ENCODE measurements at regions of chr5 and their contacts with region 1.

Region 1: DNA sequence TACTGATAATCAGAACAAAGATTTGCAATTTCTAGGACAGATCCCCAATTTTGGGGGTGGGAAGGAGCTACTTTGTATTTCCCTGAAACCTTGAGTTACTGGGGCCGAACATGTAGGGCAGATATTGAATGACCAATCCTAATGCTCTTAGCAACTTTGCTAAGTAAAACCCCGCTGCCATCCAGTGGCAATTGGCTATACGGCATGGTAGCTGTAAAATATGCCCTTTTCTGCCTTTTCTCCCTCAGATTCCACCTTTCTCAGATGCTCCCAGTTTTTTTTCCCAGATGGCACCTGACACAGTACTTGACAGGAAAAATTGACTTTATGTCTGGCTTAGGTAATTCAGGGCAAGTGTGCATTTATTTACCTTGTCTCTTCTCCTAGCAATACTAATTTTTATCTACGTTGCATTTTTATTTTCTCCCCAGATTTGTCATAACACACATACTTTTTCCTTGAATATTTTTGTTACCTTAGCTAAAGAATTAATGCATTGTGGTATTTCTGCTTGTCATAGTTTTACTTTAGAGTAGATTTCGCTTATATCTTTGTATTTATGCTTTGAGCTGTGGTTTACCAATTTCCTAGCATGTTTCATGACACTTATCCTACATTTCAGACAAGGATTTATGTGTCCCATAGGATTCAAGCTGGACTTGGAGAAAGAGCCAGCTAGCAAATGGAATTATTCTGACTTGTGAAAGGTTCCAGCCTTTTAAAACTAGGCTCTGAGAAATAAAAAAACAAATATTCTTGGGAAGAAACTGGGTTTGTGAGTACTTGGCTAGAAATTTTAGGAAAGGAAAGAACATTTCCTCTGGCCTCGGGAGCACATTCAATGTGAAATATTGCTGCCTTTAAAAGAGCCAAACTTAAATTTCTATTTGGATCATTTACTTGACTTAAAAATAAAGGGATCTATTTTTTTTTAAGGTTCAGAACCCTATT is 37.4 kb downstream of the PIK3R1 start:
- DNase-seq: no peak
- ATAC-seq: peak; percentile 75
- H3K4me3 Mint-ChIP-seq: no peak overlapping the region
- H3K27ac Mint-ChIP-seq: no peak overlapping the region
- H3K4me1 Mint-ChIP-seq: peaks cover 83% of the 10 kb centered on the region
- H3K27me3 Mint-ChIP-seq: no peaks in the 10 kb centered on the region
- CTCF ChIP-seq: no peak

Region 2: GRCh38 chr5:67887641-67888161 is 365.2 kb before region 1 on chr5:
- CTCF ChIA-PET with region 1: no interaction called
- POLR2A ChIA-PET with region 1: no interaction called
- intact Hi-C with region 1: no loop called
- DNase-seq: no peak
- ATAC-seq: no peak
- H3K4me3 Mint-ChIP-seq: no peak overlapping the region
- H3K27ac Mint-ChIP-seq: no peak overlapping the region
- H3K4me1 Mint-ChIP-seq: no peaks in the 10 kb centered on the region
- H3K27me3 Mint-ChIP-seq: no peaks in the 10 kb centered on the region
- CTCF ChIP-seq: no peak

Region 3: GRCh38 chr5:68272289-68272688 is 19.3 kb after region 1 on chr5:
- CTCF ChIA-PET with region 1: interaction called, 19 read pairs
- POLR2A ChIA-PET with region 1: no interaction called
- intact Hi-C with region 1: no loop called
- DNase-seq: no peak
- ATAC-seq: no peak
- H3K4me3 Mint-ChIP-seq: no peak overlapping the region
- H3K27ac Mint-ChIP-seq: no peak overlapping the region
- H3K4me1 Mint-ChIP-seq: peaks cover 40% of the 10 kb centered on the region
- H3K27me3 Mint-ChIP-seq: no peaks in the 10 kb centered on the region
- CTCF ChIP-seq: no peak

Region 4: DNA sequence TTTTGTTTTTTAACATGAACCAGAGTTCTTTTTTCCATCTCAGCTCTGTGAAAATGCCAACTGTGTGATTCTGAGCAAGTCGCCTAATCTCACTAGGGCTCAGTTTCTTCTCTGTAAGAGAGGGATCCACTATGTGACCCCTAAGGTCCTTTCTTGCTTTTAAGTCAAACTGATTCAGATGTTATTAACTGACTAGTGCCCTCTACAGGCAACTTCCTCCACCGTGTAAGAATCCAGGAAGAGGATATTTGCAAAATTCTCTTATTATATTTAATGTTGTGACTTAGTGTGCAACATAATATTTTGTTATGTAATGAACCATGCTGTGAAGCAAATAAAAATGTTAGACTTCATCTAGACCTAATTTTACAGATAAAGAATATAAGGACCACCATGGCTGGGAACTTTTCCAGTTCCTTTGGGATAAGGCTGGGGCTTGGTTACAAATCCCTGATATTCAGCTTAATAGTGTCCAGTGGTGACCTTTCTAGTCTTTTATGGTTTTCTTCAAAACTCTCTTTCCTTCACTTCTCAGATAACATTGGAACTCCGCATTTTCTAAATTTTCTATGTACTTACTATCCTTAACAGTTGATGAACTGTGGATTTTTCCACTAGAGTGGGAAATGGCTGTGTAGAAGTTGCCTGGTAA is 207.3 kb after region 1 on chr5:
- CTCF ChIA-PET with region 1: no interaction called
- POLR2A ChIA-PET with region 1: no interaction called
- intact Hi-C with region 1: no loop called
- DNase-seq: no peak
- ATAC-seq: peak; percentile 56
- H3K4me3 Mint-ChIP-seq: no peak overlapping the region
- H3K27ac Mint-ChIP-seq: no peak overlapping the region
- H3K4me1 Mint-ChIP-seq: no peaks in the 10 kb centered on the region
- H3K27me3 Mint-ChIP-seq: no peaks in the 10 kb centered on the region
- CTCF ChIP-seq: peak; percentile 54